Gastrocnemius medialis (tissue), 4 donors: ENCODE measurements at regions of chr5 and their contacts with region 1.

Region 1: GRCh38 chr5:6745706-6746222 is 32.5 kb downstream of the TENT4A start:
- DNase-seq: no peak
- ATAC-seq: peak; percentile 79 to 92
- H3K4me3 ChIP-seq: no peak overlapping the region
- H3K27ac ChIP-seq: peak overlapping the region in 3 of 4 donors; percentile 8 to 40 (median 19)
- H3K4me1 ChIP-seq: peaks cover 0 to 7% of the 10 kb centered on the region in 2 donors
- H3K27me3 ChIP-seq: no peaks in the 10 kb centered on the region
- CTCF ChIP-seq: peak; percentile 67 to 83 (median 80)
- POLR2A ChIP-seq: no peak

Region 2: DNA sequence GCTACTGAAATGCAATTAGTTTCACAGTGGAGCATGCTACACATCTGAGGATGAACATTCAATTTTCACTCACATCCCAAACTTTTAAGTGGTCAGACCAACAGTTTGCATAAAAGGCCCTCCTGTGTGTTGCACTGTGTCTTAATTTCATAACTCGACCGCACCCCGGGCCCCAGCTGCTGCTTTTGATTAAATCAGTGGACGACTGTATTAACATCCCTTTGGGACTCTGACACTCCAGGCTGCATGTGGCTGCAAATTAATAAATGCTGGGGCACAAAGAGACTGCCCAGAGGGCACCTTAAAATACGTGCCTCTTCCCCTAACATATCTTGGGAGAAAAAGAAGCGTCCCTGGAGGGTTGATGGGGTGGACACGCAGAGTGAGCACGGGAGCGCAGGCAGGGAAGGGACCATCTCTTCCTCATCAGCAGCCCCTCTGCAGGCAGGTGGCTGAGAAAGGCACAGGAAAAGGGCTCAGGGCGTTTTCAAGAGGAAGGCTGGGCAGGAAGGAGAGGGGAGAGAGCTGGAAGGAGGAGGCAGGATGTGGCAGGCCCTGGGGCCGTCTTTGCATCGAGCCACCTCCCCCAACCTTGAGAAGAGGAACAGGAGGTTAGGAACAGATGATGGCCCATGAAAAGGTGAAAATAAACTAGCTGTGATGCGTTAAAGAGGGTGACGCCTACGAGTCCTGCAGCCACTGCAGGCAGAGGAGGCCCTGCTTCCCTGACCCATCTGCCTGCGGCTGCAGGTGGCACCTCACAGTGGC is 386.0 kb before region 1 on chr5:
- in situ Hi-C with region 1: loop called in 1 of 4 experiments (anchors 25 kb)
- intact Hi-C with region 1: no loop called
- DNase-seq: no peak
- ATAC-seq: no peak
- H3K4me3 ChIP-seq: no peak overlapping the region
- H3K27ac ChIP-seq: no peak overlapping the region
- H3K4me1 ChIP-seq: peaks cover 0 to under 1% of the 10 kb centered on the region in 2 donors
- H3K27me3 ChIP-seq: no peaks in the 10 kb centered on the region
- CTCF ChIP-seq: no peak
- POLR2A ChIP-seq: no peak

Region 3: DNA sequence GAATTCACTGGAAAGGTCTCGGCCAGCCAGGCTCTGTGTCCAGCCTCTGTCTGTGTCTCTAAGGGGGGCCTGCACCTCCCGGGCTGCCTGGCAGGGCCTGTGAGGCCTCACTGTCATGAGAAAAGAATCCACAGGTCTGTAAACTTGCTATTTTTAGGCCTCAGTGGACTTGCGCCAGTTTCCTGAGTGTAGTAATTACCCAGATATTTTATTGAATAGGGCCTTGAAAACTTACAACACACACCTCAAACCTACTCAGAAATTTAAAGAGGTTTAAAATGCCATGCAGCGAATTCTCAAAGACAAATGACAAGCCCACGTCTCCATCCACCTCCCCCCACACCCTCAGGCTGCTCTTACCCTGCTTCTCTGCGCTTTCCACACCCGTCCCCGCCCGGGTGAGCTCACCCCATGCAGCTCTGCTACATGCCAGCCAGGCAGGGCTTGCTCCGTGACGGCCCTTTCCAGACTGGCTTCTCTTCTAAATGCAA is 41.4 kb before region 1 on chr5:
- in situ Hi-C with region 1: no loop called
- intact Hi-C with region 1: loop called (anchors 1 kb)
- DNase-seq: peak; percentile 60 to 87
- ATAC-seq: peak; percentile 96 to 97
- H3K4me3 ChIP-seq: peak overlapping the region in 1 of 4 donors; percentile 4
- H3K27ac ChIP-seq: peak overlapping the region; percentile 84 to 91 (median 88)
- H3K4me1 ChIP-seq: peaks cover 18% of the 10 kb centered on the region in 2 donors
- H3K27me3 ChIP-seq: no peaks in the 10 kb centered on the region
- CTCF ChIP-seq: no peak
- POLR2A ChIP-seq: no peak